CD4-positive, alpha-beta memory T cell (primary cell): ENCODE measurements at regions of chr17 and their contacts with region 1.

Region 1: GRCh38 chr17:5078106-5079028 is at the start of gene ZFP3:
- DNase-seq: peak; percentile 65 to 84 (median 72)
- H3K4me3 ChIP-seq: peak within 1 kb of the TSS; percentile 76 to 87
- H3K4me3 Mint-ChIP-seq: peak within 1 kb of the TSS; percentile 89 to 98 (median 94)
- H3K27ac ChIP-seq: peak within 1 kb of the TSS; percentile 64
- H3K27ac Mint-ChIP-seq: peak within 1 kb of the TSS; percentile 30 to 98 (median 93)
- H3K4me1 ChIP-seq: peaks cover 16% of the 10 kb centered on the region
- H3K4me1 Mint-ChIP-seq: peaks cover 19 to 34% (median 30%) of the 10 kb centered on the region in 4 donors
- H3K27me3 ChIP-seq: no peaks in the 10 kb centered on the region
- H3K27me3 Mint-ChIP-seq: no peaks in the 10 kb centered on the region
- total RNA-seq, gene ZFP3: 12.0 to 13.0 TPM

Region 2: DNA sequence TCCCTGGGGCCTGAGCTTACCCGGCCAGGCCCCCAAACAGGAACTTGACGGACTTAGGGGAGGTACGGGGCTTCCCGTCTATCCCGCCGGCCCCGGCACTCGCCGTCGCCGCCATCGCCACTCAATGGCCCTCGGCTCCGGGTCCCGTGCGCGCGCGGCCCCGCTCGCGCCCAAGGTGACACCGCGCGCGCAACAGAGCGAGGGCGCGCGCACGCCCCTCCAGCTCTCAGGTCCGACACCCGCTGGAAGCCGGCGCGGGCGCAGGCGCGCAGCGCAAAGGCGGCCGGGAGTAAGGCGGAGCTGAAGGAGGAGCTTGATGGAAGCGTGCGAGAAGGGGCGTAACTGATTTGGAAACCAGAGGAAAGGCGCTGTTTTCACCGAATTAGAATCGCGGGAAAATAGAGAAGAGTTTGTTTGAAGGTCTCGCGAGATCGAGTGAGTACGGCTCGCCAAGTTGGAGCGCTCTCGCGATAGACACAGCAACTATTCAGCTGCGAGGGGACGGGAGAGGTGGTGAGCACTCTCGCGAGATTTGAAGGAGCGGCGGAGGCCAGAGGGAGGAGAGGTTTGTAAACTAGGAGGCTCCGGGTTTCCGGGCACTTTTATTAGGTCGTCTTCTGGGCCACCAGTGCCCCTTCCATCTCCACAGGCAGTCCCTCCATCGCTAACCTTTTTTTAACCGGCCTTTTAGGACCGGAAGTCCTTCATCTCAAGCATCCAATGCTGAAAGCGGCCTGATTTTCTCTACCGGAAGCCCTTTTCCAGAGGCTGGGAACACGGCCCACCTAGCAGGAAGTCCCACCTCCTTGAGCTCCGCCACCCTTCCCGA is 138.4 kb before region 1 on chr17 and contains the starts of genes RNF167 and SLC25A11:
- CTCF ChIA-PET with region 1: no interaction called
- POLR2A ChIA-PET with region 1: interaction called, 13 read pairs
- intact Hi-C with region 1: no loop called
- DNase-seq: peak; percentile 96 to 99 (median 99)
- H3K4me3 ChIP-seq: peak within 1 kb of the TSS; percentile 99
- H3K4me3 Mint-ChIP-seq: peak within 1 kb of the TSS; percentile 95 to 100 (median 98)
- H3K27ac ChIP-seq: peak within 1 kb of the TSS; percentile 81
- H3K27ac Mint-ChIP-seq: peak within 1 kb of the TSS; percentile 92 to 100 (median 98)
- H3K4me1 ChIP-seq: peaks cover 57% of the 10 kb centered on the region
- H3K4me1 Mint-ChIP-seq: peaks cover 43 to 72% (median 55%) of the 10 kb centered on the region in 4 donors
- H3K27me3 ChIP-seq: no peaks in the 10 kb centered on the region
- H3K27me3 Mint-ChIP-seq: no peaks in the 10 kb centered on the region
- total RNA-seq, gene RNF167: 154 to 172 TPM
- total RNA-seq, gene SLC25A11: 43.5 to 49.5 TPM

Region 3: DNA sequence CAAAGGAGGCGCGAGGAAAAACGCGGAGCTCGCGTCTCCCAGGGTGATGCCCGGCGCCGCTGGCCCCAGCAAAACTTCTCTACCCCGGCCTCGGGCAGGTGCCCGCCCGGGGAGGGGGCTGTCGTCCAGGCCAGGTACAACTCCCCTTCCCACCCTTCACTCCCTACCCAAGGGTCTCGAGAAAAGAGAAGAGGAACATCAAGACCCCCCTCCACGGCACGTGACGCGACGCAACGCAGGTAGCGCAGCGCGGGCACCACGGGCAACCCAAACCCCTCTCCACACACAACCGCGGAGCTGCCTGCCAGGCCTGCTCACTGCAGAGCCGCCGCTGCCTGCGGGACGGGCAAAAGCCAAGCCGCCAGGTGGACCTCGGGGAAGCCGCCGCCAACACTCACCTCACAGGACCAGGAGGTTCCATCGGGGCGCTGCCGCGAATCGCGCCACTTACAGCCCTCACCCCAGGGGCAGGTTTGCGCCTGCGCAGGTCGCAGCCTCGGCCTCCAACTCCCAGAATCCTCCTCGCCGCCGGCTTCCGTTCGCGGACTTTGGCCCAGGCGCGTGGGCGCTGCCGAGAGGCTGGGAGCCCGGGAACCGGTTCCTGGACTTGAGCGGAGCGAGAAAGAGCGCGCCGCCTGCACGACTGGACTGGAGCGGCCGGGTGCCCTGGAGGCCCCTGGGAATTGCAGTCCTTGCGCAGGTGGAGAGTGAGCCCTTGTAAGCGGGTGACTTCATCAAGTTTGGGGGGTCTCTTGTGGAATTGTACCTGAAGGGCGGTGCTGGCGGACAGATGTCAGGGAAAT is 33.2 kb after region 1 on chr17 and contains the start of gene ZNF232:
- CTCF ChIA-PET with region 1: interaction called, 3 read pairs
- POLR2A ChIA-PET with region 1: interaction called, 15 read pairs
- intact Hi-C with region 1: loop called (anchors 1 kb)
- DNase-seq: peak; percentile 85 to 89 (median 88)
- H3K4me3 ChIP-seq: peak within 1 kb of the TSS; percentile 89 to 94
- H3K4me3 Mint-ChIP-seq: peak within 1 kb of the TSS; percentile 83 to 92 (median 91)
- H3K27ac ChIP-seq: peak within 1 kb of the TSS; percentile 57
- H3K27ac Mint-ChIP-seq: peak within 1 kb of the TSS; percentile 18 to 94 (median 75)
- H3K4me1 ChIP-seq: peaks cover 13% of the 10 kb centered on the region
- H3K4me1 Mint-ChIP-seq: peaks cover 11 to 34% (median 22%) of the 10 kb centered on the region in 4 donors
- H3K27me3 ChIP-seq: peaks cover 4% of the 10 kb centered on the region
- H3K27me3 Mint-ChIP-seq: peaks cover 8 to 14% of the 10 kb centered on the region in 2 donors
- total RNA-seq, gene ZNF232: 18.7 to 19.7 TPM

Region 4: DNA sequence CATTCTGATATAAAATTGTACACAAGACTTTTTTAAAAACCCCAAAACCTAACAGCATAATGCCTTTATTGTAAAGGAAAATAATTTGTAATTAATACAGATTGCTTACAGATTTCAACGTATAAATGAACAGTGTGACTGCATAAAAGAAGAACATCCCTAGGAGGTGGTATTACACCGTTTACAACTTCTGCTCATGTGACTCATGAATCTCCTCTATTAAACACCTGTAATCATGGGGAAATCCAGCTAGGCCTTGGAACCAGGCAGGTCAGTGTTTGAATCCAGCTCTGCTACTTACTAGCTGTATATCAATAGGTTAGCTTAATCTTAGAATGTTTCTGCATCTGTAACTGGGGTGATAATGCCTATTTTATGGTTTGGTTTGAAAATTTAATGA is 218.9 kb after region 1 on chr17:
- CTCF ChIA-PET with region 1: no interaction called
- POLR2A ChIA-PET with region 1: no interaction called
- intact Hi-C with region 1: no loop called
- DNase-seq: no peak
- H3K4me3 ChIP-seq: no peak overlapping the region
- H3K4me3 Mint-ChIP-seq: no peak overlapping the region
- H3K27ac ChIP-seq: no peak overlapping the region
- H3K27ac Mint-ChIP-seq: peak overlapping the region in 3 of 7 donors; percentile 24 to 30 (median 29)
- H3K4me1 ChIP-seq: peaks cover 10% of the 10 kb centered on the region
- H3K4me1 Mint-ChIP-seq: peaks cover 30 to 44% (median 39%) of the 10 kb centered on the region in 4 donors
- H3K27me3 ChIP-seq: no peaks in the 10 kb centered on the region
- H3K27me3 Mint-ChIP-seq: no peaks in the 10 kb centered on the region